ENCODE measurements at regions of chr3 and their contacts with region 1.

Region 1: GRCh38 chr3:158434412-158435038 is 136.5 kb upstream of the MLF1 start:
- DNase-seq: peak; percentile 81
- H3K4me3 Mint-ChIP-seq: no peak overlapping the region
- H3K27ac Mint-ChIP-seq: no peak overlapping the region
- H3K4me1 Mint-ChIP-seq: peaks cover 19% of the 10 kb centered on the region
- H3K27me3 Mint-ChIP-seq: no peaks in the 10 kb centered on the region
- CTCF ChIP-seq: peak; percentile 90

Region 2: GRCh38 chr3:157618075-157618760 is 816.3 kb before region 1 on chr3:
- CTCF ChIA-PET with region 1: interaction called, 7 read pairs
- intact Hi-C with region 1: loop called (anchors 1 kb)
- DNase-seq: peak; percentile 29
- H3K4me3 Mint-ChIP-seq: no peak overlapping the region
- H3K27ac Mint-ChIP-seq: no peak overlapping the region
- H3K4me1 Mint-ChIP-seq: peaks cover 9% of the 10 kb centered on the region
- H3K27me3 Mint-ChIP-seq: peaks cover 13% of the 10 kb centered on the region
- CTCF ChIP-seq: peak; percentile 80

Region 3: DNA sequence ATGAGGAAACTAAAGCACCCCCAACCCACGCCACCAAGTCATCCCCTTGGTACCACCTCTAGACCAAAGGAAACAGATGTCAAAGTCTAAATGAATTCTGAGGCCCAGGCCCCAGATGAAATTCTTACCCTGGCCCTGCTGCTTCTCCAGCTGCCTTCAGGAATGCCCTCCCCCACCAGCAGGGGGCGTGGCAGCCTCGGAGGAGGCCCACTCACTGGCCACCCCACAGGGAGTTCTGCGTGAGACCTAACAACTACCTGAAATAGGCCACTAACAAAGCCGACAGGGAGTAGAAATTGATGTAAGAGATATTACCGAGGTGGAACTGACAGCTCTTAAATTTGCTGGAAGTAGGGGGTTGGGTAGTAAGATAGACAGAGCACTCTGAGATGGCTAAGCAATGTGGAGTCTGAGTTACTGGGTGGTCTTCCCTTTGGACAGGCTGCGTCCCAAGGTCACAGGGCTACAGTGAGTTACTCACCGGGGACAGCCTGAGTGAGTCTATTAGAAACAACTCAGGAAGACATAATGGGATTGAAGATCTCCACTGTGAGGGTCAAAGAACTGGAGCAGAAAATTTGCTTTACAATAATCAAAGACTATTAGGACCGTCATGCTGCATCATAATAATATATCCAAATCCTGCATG is 569.0 kb before region 1 on chr3:
- CTCF ChIA-PET with region 1: interaction called, 7 read pairs
- intact Hi-C with region 1: loop called (anchors 1 kb)
- DNase-seq: peak; percentile 88
- H3K4me3 Mint-ChIP-seq: no peak overlapping the region
- H3K27ac Mint-ChIP-seq: no peak overlapping the region
- H3K4me1 Mint-ChIP-seq: no peaks in the 10 kb centered on the region
- H3K27me3 Mint-ChIP-seq: peaks cover 14% of the 10 kb centered on the region
- CTCF ChIP-seq: peak; percentile 89

Region 4: GRCh38 chr3:158109804-158110657 is 324.5 kb before region 1 on chr3 and contains the start of gene RSRC1:
- CTCF ChIA-PET with region 1: interaction called, 4 read pairs
- intact Hi-C with region 1: loop called (anchors 5 kb)
- DNase-seq: peak; percentile 91
- H3K4me3 Mint-ChIP-seq: peak within 1 kb of the TSS; percentile 83
- H3K27ac Mint-ChIP-seq: peak within 1 kb of the TSS; percentile 84
- H3K4me1 Mint-ChIP-seq: peaks cover 33% of the 10 kb centered on the region
- H3K27me3 Mint-ChIP-seq: peaks cover 21% of the 10 kb centered on the region
- CTCF ChIP-seq: no peak
- total RNA-seq, gene RSRC1: 81.3 and 82.1 TPM in 2 replicates

Region 5: GRCh38 chr3:158532099-158532734 is 97.7 kb after region 1 on chr3:
- CTCF ChIA-PET with region 1: no interaction called
- intact Hi-C with region 1: loop called (anchors 5 kb)
- DNase-seq: peak; percentile 50
- H3K4me3 Mint-ChIP-seq: no peak overlapping the region
- H3K27ac Mint-ChIP-seq: no peak overlapping the region
- H3K4me1 Mint-ChIP-seq: peaks cover 8% of the 10 kb centered on the region
- H3K27me3 Mint-ChIP-seq: no peaks in the 10 kb centered on the region
- CTCF ChIP-seq: peak; percentile 73